HAP-1 (cell line): ENCODE measurements at regions of chr18 and their contacts with region 1.

Region 1: DNA sequence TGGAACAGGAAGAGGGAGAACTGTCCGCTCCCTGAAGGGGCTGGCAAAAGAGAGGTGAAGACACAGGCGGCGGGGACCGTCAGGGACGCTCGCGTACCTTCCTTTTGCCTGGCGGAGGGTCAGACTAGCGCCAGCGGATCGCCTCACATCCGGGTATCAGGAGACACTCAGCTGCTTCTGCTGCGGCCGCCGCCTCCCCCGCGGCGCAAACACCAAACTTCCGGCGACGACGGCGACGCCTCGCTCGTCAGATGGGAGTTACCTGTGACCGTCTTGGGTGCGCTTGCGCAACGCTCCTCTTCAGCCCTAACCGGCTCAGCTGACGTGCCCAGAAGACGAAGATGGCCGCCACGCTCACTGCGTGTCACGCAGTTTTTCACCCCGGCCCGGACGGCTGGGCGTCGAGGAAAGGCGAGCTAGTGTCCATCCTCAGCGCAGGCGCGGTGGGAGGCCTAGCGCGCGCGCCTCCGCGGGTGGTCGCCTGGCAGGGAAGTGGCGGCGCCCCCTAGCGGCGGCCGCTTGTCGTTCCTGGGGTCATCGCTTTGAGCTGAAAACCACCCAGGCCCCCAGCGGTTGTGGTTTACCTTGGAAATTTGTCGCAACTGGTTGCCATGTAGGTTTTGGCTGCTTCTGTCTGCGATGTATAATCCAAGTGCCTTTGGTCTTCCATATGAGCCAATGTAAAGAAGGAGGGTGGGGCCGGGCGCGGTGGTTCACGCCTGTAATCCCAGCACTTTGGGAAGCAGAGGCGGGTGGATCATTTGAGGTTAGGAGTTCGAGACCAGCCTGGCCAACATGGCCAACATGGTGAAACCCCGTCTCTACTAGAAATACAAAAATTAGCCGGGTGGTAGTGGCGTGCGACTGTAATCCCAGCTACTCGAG is at the start of gene ESCO1:
- DNase-seq: peak; percentile 95 to 97
- H3K4me3 ChIP-seq: peak within 1 kb of the TSS; percentile 87
- H3K4me1 ChIP-seq: peaks cover 14% of the 10 kb centered on the region
- H3K27me3 ChIP-seq: no peaks in the 10 kb centered on the region

Region 2: GRCh38 chr18:21111341-21112139 is 489.2 kb before region 1 on chr18 and contains the start of gene ROCK1:
- in situ Hi-C with region 1: loop called (anchors 25 kb)
- DNase-seq: peak; percentile 93 to 99
- H3K4me3 ChIP-seq: peak within 1 kb of the TSS; percentile 95
- H3K4me1 ChIP-seq: peaks cover 6% of the 10 kb centered on the region
- H3K27me3 ChIP-seq: no peaks in the 10 kb centered on the region

Region 3: GRCh38 chr18:21264651-21265050 is 336.1 kb before region 1 on chr18:
- in situ Hi-C with region 1: loop called (anchors 25 kb)
- DNase-seq: peak; percentile 41 to 65
- H3K4me3 ChIP-seq: no peak overlapping the region
- H3K4me1 ChIP-seq: peaks cover 59% of the 10 kb centered on the region
- H3K27me3 ChIP-seq: no peaks in the 10 kb centered on the region

Region 4: GRCh38 chr18:21509062-21509461 is 91.7 kb before region 1 on chr18:
- in situ Hi-C with region 1: loop called (anchors 25 kb)
- DNase-seq: no peak
- H3K4me3 ChIP-seq: no peak overlapping the region
- H3K4me1 ChIP-seq: no peaks in the 10 kb centered on the region
- H3K27me3 ChIP-seq: no peaks in the 10 kb centered on the region

Region 5: DNA sequence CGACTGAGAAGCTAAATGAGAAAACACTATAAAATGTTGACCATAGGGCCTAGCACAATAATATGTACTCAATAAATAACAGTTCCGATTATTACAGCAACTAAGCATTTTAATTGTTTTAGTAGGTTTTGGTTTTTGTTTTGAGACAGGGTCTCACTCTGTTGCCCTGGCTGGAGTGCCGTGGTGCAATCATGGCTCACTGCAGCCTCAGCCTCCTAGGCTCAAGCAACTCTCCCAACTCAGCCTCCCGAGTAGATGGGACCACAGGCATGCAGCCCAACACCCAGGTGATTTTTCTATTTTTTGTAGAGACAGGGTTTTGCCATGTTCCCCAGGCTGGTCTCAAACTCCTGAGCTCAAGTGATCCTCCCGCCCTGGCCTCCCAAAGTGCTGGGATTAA is 54.3 kb before region 1 on chr18:
- in situ Hi-C with region 1: no loop called
- DNase-seq: no peak
- H3K4me3 ChIP-seq: no peak overlapping the region
- H3K4me1 ChIP-seq: no peaks in the 10 kb centered on the region
- H3K27me3 ChIP-seq: no peaks in the 10 kb centered on the region

Region 6: GRCh38 chr18:21704603-21705364 is 104.0 kb after region 1 on chr18 and contains the start of gene ABHD3:
- in situ Hi-C with region 1: no loop called
- DNase-seq: peak; percentile 82 to 95
- H3K4me3 ChIP-seq: peak within 1 kb of the TSS; percentile 57
- H3K4me1 ChIP-seq: peaks cover 8% of the 10 kb centered on the region
- H3K27me3 ChIP-seq: no peaks in the 10 kb centered on the region